ENCODE measurements at regions of chr6 and their contacts with region 1.

Region 1: GRCh38 chr6:47780510-47781356 is 1.1 kb upstream of the OPN5 start:
- DNase-seq: peak in 4 of 10 donors; percentile 10 to 61 (median 42)

Region 2: DNA sequence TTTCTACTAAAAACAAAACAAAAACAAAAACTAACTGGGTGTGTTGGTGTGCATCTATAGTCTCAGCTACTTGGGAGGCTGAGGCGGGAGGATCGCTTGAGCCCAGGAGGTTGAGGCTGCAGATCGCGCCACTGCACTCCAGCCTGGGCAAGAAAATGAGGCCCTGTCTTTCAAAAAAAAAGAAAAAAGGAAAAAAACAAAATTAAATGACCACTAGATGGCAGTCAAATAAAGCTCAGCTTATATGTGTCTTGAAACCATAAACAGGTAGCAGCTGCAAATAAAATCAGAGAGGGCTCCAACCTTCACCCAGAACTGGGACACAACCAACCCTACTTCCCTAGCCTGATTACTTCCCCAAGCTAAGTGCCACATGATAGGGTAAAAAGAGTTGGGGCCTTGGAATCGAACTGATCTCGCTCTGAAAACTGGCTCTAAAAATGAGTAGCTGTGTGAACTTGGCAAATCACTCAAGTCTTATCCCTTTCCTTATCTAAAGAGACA is 149.4 kb before region 1 on chr6:
- intact Hi-C with region 1: loop called (anchors 1 kb)
- DNase-seq: peak in 1 of 10 donors; percentile 67

Measured in posterior cingulate gyrus (tissue), 11 donors.